Ascending aorta (tissue), 2 donors: ENCODE measurements at regions of chr3 and their contacts with region 1.

Region 1: DNA sequence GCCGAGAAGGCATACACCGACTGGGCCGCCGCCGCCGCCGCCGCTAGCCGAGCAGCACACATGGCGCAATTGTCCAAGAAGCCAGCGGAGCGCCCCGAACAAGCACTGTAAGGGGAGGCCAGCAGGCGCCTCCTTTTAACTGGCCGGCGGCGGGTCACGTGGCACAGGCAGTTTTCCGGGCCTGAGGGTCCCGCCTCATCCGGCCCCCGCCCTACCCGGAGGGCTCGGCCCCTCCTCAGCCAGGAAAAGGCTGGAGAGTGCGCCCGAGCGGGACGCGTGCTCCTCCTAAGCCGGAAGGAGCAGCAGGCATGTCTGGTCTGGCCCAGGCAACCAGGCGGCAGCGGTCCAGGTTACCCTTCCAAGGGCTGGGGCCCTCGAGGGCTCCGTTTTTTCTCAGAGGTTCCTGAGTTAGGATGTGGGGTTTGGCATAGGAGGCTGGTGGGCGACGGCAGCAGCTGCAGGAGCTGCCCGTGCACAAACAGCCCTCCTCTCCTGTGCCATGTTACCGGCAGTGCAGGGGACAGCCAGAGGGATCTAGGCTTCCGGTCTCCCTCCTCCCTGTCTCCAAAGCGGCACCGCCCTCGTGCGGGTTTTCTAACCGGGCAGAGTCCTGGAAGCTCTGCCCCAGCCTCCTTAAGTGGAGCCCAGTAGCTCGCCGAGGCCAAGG is at the start of gene GPX1:
- DNase-seq: peak; percentile 79 to 97
- H3K4me3 ChIP-seq: peak within 1 kb of the TSS; percentile 84 to 85
- H3K27ac ChIP-seq: peak within 1 kb of the TSS; percentile 91 to 95
- H3K4me1 ChIP-seq: peaks cover 0 to 16% of the 10 kb centered on the region in 2 donors
- H3K27me3 ChIP-seq: no peaks in the 10 kb centered on the region
- CTCF ChIP-seq: no peak
- total RNA-seq, gene GPX1: 422 TPM

Region 2: DNA sequence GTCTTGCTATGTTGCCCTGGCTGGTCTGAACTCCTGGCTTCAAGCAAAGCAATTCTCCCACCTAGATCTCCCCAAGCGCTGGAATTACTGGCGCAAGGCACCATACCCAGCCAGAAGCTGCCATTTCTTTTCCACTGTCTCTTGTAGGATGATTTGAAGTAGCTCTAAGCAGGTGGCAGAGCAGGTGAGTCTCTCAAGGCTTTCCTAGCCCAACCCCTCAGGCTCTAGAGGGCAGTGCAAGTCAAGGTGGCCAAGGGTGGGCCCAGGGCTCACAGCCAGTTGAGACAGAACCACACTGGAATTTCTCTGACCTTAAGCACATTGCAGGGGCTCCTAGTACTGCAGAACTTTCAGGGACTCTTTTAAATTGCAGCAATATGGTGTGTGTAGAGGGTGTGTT is 96.1 kb after region 1 on chr3:
- intact Hi-C with region 1: loop called (anchors 2 kb)
- DNase-seq: no peak
- H3K4me3 ChIP-seq: no peak overlapping the region
- H3K27ac ChIP-seq: peak overlapping the region; percentile 12 to 54
- H3K4me1 ChIP-seq: peaks cover 0 to 3% of the 10 kb centered on the region in 2 donors
- H3K27me3 ChIP-seq: no peaks in the 10 kb centered on the region
- CTCF ChIP-seq: peak in 1 of 3 experiments; percentile 39

Region 3: DNA sequence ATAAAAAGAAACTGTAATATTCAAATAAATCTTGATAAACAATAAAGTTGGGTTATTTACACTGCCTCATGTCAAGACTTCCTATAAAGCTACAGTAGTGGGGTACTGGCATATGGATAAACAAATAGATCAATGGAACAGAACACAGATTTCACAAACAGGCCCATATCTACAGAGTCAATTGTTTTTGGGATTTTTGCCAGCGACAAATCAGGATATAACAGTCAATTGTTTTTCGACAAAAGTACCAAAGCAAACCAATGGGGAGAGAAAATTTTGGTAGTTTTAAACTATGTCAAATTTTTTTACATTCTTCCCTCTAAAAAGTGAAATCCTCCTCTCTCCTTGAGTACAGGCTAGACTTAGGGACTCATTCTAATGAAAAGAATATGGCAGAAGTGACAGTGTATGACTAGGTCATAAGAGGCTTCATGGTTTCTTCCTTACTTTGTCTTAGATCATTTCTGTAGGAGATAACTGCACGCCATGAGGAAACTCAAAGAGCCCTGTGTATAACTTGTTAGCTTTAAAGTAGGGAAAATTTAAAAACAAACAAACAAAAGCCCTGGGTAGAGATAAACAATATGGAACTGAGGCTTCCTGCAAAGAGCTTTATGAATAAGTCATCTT is 411.1 kb after region 1 on chr3:
- intact Hi-C with region 1: no loop called
- DNase-seq: no peak
- H3K4me3 ChIP-seq: no peak overlapping the region
- H3K27ac ChIP-seq: no peak overlapping the region
- H3K4me1 ChIP-seq: no peaks in the 10 kb centered on the region
- H3K27me3 ChIP-seq: no peaks in the 10 kb centered on the region
- CTCF ChIP-seq: no peak